ENCODE measurements at regions of chr10 and their contacts with region 1.

Region 1: GRCh38 chr10:76086761-76087639 is 655.6 kb downstream of the LRMDA start:
- DNase-seq: peak in 1 of 2 donors; percentile 67
- H3K4me3 ChIP-seq: no peak overlapping the region
- H3K27ac ChIP-seq: peak overlapping the region; percentile 57 to 61
- H3K4me1 ChIP-seq: peaks cover 0 to 7% of the 10 kb centered on the region in 2 donors
- H3K27me3 ChIP-seq: no peaks in the 10 kb centered on the region
- CTCF ChIP-seq: peak; percentile 22 to 41 (median 33)

Region 2: GRCh38 chr10:74786088-74786487 is 1300.9 kb before region 1 on chr10:
- intact Hi-C with region 1: loop called (anchors 5 kb)
- DNase-seq: no peak
- H3K4me3 ChIP-seq: no peak overlapping the region
- H3K27ac ChIP-seq: no peak overlapping the region
- H3K4me1 ChIP-seq: no peaks in the 10 kb centered on the region
- H3K27me3 ChIP-seq: no peaks in the 10 kb centered on the region
- CTCF ChIP-seq: no peak

Region 3: GRCh38 chr10:76051007-76051936 is 35.7 kb before region 1 on chr10:
- intact Hi-C with region 1: no loop called
- DNase-seq: no peak
- H3K4me3 ChIP-seq: no peak overlapping the region
- H3K27ac ChIP-seq: no peak overlapping the region
- H3K4me1 ChIP-seq: no peaks in the 10 kb centered on the region
- H3K27me3 ChIP-seq: no peaks in the 10 kb centered on the region
- CTCF ChIP-seq: no peak

Region 4: GRCh38 chr10:76126607-76127527 is 39.9 kb after region 1 on chr10:
- intact Hi-C with region 1: no loop called
- DNase-seq: no peak
- H3K4me3 ChIP-seq: no peak overlapping the region
- H3K27ac ChIP-seq: no peak overlapping the region
- H3K4me1 ChIP-seq: no peaks in the 10 kb centered on the region
- H3K27me3 ChIP-seq: no peaks in the 10 kb centered on the region
- CTCF ChIP-seq: no peak

Measured in ascending aorta (tissue), 2 donors.